BJ (cell line): ENCODE measurements at regions of chr9 and their contacts with region 1.

Region 1: DNA sequence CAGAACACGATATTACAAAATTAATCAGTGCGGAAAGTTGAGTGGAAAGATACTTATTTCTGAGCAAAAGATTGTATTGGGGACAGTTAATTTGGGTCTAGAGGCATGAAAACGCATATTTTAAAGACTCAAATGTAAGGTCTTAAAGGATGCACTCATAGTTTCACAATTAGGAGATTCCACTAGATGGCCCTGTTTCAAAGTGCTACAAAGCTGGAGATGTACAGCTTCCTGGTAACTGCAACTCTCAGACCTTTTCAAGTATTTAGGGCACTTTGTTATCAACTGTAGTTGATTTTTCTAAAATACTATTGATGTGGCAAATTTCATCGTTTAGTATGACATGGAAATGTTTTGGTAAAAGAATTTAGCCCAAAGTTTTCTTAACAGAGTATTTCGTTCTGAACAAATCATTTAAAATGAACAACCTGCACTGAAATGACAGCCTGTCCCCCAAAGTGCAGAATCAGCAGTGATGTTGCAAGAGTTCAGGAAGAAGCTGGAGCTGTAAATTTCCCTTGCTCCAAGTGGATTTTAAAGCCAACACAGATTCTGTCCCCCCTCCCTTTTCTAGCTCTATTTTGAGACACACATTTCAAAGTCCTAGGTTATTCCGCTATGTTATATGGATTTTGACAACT is 16.2 kb upstream of the NDUFB6 start:
- DNase-seq: no peak
- H3K4me3 ChIP-seq: no peak overlapping the region
- H3K27me3 ChIP-seq: peaks cover 1% of the 10 kb centered on the region; the same call in 1 of the 2 replicates
- CTCF ChIP-seq: peak; percentile 60

Region 2: GRCh38 chr9:32968101-32969011 is 379.2 kb after region 1 on chr9:
- CTCF ChIA-PET with region 1: interaction called, 162 read pairs
- POLR2A ChIA-PET with region 1: interaction called, 5 read pairs
- DNase-seq: no peak
- H3K4me3 ChIP-seq: no peak overlapping the region
- H3K27me3 ChIP-seq: no peaks in the 10 kb centered on the region
- CTCF ChIP-seq: peak; percentile 72